ENCODE measurements at regions of chr2 and their contacts with region 1.

Region 1: GRCh38 chr2:99710721-99711120 is 220.9 kb upstream of the REV1 start:
- DNase-seq: peak in 1 of 2 donors; percentile 17
- ATAC-seq: peak; percentile 35 to 62 (median 48)
- H3K4me3 ChIP-seq: no peak overlapping the region
- H3K27ac ChIP-seq: peak overlapping the region in 7 of 10 donors; percentile 18 to 84 (median 58)
- H3K4me1 ChIP-seq: peaks cover 5 to 60% (median 41%) of the 10 kb centered on the region in 9 donors
- H3K27me3 ChIP-seq: no peaks in the 10 kb centered on the region
- CTCF ChIP-seq: no peak

Region 2: DNA sequence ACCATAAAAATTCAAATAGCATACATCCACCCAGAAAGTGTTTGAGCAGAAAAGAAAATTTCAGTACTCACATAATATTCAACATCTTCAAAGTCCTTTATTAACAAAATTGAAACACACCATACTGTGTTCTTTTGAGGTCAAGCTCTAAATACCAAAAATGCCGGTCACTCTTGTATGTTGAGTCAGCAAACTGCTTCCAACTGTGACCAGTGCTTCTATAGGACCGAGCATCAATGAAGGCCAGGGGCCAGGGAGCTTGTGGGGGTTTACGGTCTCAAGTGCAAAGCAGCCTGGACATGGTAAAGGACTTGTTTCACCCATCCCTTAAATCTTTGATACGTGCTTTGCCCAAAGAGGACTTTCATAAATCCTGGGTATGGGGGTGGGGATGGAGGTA is 108.2 kb before region 1 on chr2:
- intact Hi-C with region 1: no loop called
- DNase-seq: no peak
- ATAC-seq: no peak
- H3K4me3 ChIP-seq: no peak overlapping the region
- H3K27ac ChIP-seq: no peak overlapping the region
- H3K4me1 ChIP-seq: peaks cover 0 to 8% (median 0%) of the 10 kb centered on the region in 9 donors
- H3K27me3 ChIP-seq: peaks cover 0 to 5% (median 0%) of the 10 kb centered on the region in 7 donors
- CTCF ChIP-seq: no peak

Region 3: DNA sequence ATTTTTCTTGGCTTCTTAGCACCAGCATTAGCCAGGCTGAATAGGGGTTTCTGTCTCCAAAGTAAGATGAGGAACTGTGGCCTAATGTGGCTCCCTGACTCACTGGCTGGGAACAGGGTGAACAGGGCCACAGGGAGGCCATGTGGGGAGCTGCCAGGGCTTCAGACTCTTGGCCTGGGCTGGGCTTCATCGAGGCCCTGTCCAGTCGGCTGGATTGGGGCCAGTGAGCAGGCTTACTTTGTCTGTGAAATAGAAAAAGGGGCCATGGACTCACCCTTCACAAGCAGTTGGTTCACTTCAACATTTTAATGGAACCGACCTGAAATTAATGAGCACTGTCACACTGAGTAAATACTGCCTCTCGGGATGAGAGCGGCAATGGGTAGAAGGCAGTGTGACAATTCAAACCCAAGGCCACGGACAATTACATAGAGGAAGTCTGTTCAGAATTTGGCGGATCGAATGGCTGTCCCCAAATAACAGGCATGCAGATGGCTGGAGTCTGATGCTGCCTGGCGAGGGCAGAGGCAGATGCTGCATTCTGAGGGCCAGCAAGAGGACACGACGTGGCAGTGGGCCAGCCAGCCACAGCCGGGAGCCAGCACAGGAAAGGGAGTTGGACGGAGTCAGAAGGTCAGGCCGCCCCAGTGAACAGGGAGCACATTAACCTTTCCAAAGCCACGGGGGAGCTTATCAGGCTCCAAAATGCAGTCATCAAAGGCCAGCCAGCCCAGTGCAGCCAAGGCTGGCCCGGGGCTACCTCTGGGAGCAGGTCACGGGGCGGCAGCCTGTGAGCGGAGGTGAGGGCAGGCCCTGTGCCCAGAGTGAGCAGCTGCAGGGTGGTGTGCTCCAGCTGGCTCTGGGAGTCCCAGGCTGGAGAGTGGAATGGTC is 74.3 kb before region 1 on chr2:
- intact Hi-C with region 1: loop called in 1 of 10 experiments (anchors 10 kb)
- DNase-seq: peak; percentile 90 to 93
- ATAC-seq: peak; percentile 91 to 98 (median 95)
- H3K4me3 ChIP-seq: no peak overlapping the region
- H3K27ac ChIP-seq: peak overlapping the region; percentile 20 to 86 (median 73)
- H3K4me1 ChIP-seq: peaks cover 6 to 37% (median 24%) of the 10 kb centered on the region in 9 donors
- H3K27me3 ChIP-seq: no peaks in the 10 kb centered on the region
- CTCF ChIP-seq: peak in 1 of 9 donors; percentile 15

Region 4: GRCh38 chr2:99662761-99663341 is 47.9 kb before region 1 on chr2:
- intact Hi-C with region 1: loop called in 2 of 10 experiments (anchors 5 kb)
- DNase-seq: peak in 1 of 2 donors; percentile 59
- ATAC-seq: peak; percentile 76 to 90 (median 83)
- H3K4me3 ChIP-seq: no peak overlapping the region
- H3K27ac ChIP-seq: peak overlapping the region in 9 of 10 donors; percentile 19 to 81 (median 56)
- H3K4me1 ChIP-seq: peaks cover 9 to 47% (median 27%) of the 10 kb centered on the region in 9 donors
- H3K27me3 ChIP-seq: no peaks in the 10 kb centered on the region
- CTCF ChIP-seq: no peak

Measured in heart right ventricle (tissue), 16 donors.